Dorsolateral prefrontal cortex (tissue), 120 donors: ENCODE measurements at regions of chr4 and their contacts with region 1.

Region 1: DNA sequence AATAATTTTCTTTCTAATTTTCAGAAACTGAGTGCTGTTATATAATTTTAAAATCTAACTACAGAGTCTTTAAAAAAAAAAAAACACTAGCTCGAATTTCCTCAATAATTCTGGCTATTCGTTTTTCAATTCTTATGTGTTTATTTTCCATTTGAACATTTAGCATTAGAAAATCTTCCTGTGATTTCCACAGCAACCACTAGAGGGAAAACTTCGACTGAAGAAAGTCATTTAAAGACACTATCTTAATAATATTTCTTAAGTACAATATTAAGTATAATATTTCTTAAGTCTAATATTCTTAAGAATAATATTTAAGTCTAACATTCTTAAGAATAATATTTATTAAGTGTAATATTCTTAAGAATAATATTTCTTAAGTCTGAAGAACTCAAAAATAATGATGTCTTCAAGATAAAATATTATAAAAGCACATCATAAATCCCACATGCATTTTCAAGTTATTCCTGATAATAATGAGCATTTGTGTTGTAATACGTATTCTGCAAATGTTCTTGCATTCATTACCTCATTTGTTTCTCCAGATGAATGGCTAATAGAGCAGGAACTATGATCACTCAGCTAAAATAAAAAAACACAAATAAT is 118.4 kb upstream of the WDR17 start:
- DNase-seq: no peak
- H3K4me3 ChIP-seq: peak overlapping the region in 21 of 59 donors; percentile 3 to 39 (median 23)
- H3K27ac ChIP-seq: peak overlapping the region in 49 of 59 donors; percentile 8 to 86 (median 69)
- H3K27me3 ChIP-seq: peaks cover 0 to 14% (median 0%) of the 10 kb centered on the region in 45 donors
- CTCF ChIP-seq: peak; percentile 61 to 89 (median 77)

Region 2: DNA sequence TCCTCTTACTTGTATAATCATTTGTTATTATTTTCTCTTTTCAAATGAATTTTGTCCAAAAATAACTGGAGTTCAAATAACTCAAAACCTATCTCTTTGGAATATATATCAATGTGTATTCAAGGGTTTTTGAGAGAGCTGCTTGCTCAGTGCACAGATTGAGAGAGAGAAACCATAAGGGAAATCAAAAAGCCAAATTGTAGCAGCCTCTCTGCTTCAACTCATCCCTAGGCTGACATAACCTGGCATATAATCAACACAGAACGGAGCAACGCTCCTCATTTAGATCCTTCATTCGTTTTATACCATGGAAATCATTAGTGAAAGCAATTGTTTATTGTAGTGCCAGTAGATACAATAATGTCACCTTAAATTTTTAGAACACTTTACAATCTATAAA is 133.4 kb before region 1 on chr4:
- intact Hi-C with region 1: loop called in 1 of 2 experiments (anchors 5 kb)
- DNase-seq: no peak
- H3K4me3 ChIP-seq: peak overlapping the region in 46 of 59 donors; percentile 4 to 73 (median 57)
- H3K27ac ChIP-seq: peak overlapping the region in 58 of 59 donors; percentile 30 to 99 (median 88)
- H3K27me3 ChIP-seq: peaks cover 0 to 41% (median 0%) of the 10 kb centered on the region in 45 donors
- CTCF ChIP-seq: no peak

Region 3: GRCh38 chr4:176340871-176341685 is 393.9 kb after region 1 on chr4:
- intact Hi-C with region 1: loop called in 1 of 2 experiments (anchors 10 kb)
- DNase-seq: no peak
- H3K4me3 ChIP-seq: peak overlapping the region in 45 of 59 donors; percentile 9 to 60 (median 44)
- H3K27ac ChIP-seq: peak overlapping the region in 1 of 59 donors; percentile 1
- H3K27me3 ChIP-seq: no peaks in the 10 kb centered on the region
- CTCF ChIP-seq: peak; percentile 35 to 90 (median 76)